ENCODE measurements at regions of chr7 and their contacts with region 1.

Region 1: DNA sequence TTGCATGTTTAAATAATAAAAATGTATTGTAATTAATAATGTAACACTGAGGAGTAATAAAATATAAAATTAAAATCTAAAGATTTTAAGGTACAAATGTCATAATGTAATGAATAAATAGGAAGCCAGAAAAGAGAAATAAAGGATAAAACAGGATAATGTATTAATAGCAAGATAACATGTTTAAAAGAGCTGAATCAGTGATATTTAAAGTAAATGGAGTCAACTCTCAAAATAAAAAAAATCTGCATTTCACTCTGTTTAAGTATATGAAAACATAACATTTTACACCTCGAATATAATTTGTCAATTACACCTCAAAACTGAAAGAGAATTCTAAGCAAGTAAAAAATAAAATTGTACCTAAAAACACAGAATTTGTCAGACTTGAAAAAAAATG is 44.1 kb downstream of the GRM3 start:
- DNase-seq: no peak
- H3K4me3 ChIP-seq: no peak overlapping the region
- H3K27ac ChIP-seq: no peak overlapping the region
- H3K4me1 ChIP-seq: no peaks in the 10 kb centered on the region
- H3K27me3 ChIP-seq: no peaks in the 10 kb centered on the region
- CTCF ChIP-seq: no peak
- EP300 ChIP-seq: no peak
- POLR2A ChIP-seq: no peak

Region 2: GRCh38 chr7:85595639-85596268 is 1092.1 kb before region 1 on chr7:
- in situ Hi-C with region 1: no loop called
- intact Hi-C with region 1: loop called (anchors 10 kb)
- DNase-seq: no peak
- H3K4me3 ChIP-seq: no peak overlapping the region
- H3K27ac ChIP-seq: no peak overlapping the region
- H3K4me1 ChIP-seq: no peaks in the 10 kb centered on the region
- H3K27me3 ChIP-seq: no peaks in the 10 kb centered on the region
- CTCF ChIP-seq: no peak
- EP300 ChIP-seq: no peak
- POLR2A ChIP-seq: no peak

Region 3: DNA sequence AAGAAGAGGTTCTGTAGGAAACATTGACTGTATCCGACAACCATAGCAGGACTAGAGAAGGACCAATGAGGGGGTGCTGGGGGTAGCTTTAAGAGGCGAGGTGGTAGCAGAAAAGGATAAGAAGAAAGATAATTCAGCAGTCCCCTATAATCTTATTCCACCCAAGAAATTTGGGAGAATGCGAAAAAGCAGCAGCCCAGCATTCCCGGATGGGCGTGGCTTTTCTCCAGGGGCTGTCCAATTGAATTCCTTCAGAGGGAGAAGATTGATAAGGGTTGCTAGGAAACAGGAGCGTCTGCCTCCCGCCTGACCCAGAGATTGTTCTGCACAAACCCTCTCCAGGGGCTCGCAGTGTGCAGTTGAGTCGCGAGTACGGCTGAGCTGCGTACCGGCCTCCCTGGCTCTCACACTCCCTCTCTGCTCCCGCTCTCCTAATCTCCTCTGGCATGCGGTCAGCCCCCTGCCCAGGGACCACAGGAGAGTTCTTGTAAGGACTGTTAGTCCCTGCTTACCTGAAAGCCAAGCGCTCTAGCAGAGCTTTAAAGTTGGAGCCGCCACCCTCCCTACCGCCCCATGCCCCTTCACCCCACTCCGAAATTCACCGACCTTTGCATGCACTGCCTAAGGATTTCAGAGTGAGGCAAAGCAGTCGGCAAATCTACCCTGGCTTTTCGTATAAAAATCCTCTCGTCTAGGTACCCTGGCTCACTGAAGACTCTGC is 44.1 kb before region 1 on chr7 and contains the start of gene GRM3:
- in situ Hi-C with region 1: no loop called
- intact Hi-C with region 1: no loop called
- DNase-seq: no peak
- H3K4me3 ChIP-seq: peak within 1 kb of the TSS in 1 of 4 donors; percentile 14
- H3K27ac ChIP-seq: no peak within 1 kb of the TSS
- H3K4me1 ChIP-seq: peaks cover 0 to 6% (median 0%) of the 10 kb centered on the region in 4 donors
- H3K27me3 ChIP-seq: peaks cover 54% of the 10 kb centered on the region
- CTCF ChIP-seq: no peak
- EP300 ChIP-seq: no peak
- POLR2A ChIP-seq: no peak
- total RNA-seq, gene GRM3: not detected

Region 4: DNA sequence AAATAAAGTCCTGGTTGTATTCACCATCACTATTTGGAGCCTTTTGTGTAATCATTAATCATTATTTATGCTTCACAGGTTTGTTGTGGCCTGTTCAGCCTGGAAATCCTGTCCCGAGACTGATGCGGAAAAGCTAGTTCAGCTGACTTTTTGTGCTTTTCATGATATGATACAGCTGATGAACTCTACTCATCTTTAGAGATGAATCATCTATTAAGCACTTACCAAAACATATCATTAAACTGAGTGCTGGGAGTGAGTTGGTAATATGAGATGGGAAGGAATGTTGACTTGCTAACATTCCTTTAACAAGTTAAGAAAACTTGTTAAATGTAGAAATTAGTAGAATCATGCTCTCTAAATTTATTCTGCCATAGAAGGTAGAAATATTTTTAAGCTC is 710.6 kb after region 1 on chr7:
- in situ Hi-C with region 1: no loop called
- intact Hi-C with region 1: no loop called
- DNase-seq: no peak
- H3K4me3 ChIP-seq: no peak overlapping the region
- H3K27ac ChIP-seq: no peak overlapping the region
- H3K4me1 ChIP-seq: no peaks in the 10 kb centered on the region
- H3K27me3 ChIP-seq: no peaks in the 10 kb centered on the region
- CTCF ChIP-seq: no peak
- EP300 ChIP-seq: no peak
- POLR2A ChIP-seq: no peak

Measured in transverse colon (tissue), 4 donors.